Motor neuron (in vitro differentiated cells): ENCODE measurements at regions of chr1 and their contacts with region 1.

Region 1: GRCh38 chr1:216894494-216894893 is 171.3 kb upstream of the ESRRG start:
- ATAC-seq: no peak
- H3K4me3 ChIP-seq: no peak overlapping the region
- H3K27ac ChIP-seq: no peak overlapping the region
- H3K4me1 ChIP-seq: peaks cover 0 to 5% of the 10 kb centered on the region in 2 donors

Region 2: GRCh38 chr1:216830424-216831210 is 63.9 kb before region 1 on chr1:
- in situ Hi-C with region 1: loop called in 1 of 9 experiments (anchors 10 kb)
- ATAC-seq: peak in 7 of 8 experiments; percentile 63 to 82 (median 76)
- H3K4me3 ChIP-seq: no peak overlapping the region
- H3K27ac ChIP-seq: no peak overlapping the region
- H3K4me1 ChIP-seq: peaks cover 7 to 37% of the 10 kb centered on the region in 2 donors